ENCODE measurements at regions of chr12 and their contacts with region 1.

Region 1: GRCh38 chr12:7460375-7461259 is 16.7 kb upstream of the CD163L1 start:
- DNase-seq: no peak
- H3K4me3 ChIP-seq: no peak overlapping the region
- H3K27ac ChIP-seq: no peak overlapping the region
- H3K27me3 ChIP-seq: no peaks in the 10 kb centered on the region
- CTCF ChIP-seq: peak; percentile 98

Region 2: GRCh38 chr12:7219599-7220243 is 240.9 kb before region 1 on chr12:
- CTCF ChIA-PET with region 1: interaction called, 96 read pairs
- POLR2A ChIA-PET with region 1: no interaction called
- DNase-seq: peak; percentile 33
- H3K4me3 ChIP-seq: no peak overlapping the region
- H3K27ac ChIP-seq: no peak overlapping the region
- H3K27me3 ChIP-seq: peaks cover 4% of the 10 kb centered on the region
- CTCF ChIP-seq: peak; percentile 94

Region 3: DNA sequence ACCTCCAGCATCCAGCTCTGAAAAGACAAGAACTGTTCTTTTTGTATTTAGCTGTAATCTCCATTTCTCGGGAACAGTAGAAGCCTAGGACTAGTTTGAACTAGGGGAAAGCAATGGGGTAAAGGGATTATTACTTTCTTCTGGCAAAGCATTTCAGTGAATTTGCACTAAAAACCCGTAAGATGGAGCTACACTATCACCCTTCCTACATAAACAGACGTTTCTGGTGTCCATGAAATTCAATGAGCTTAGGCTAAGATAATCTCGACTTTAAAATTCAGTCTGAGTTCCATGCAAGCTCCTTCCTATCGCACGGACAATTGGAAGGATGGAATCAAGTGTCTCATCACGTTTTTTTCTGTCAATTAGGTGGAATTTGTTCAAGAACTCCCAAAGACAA is 132.7 kb before region 1 on chr12:
- CTCF ChIA-PET with region 1: interaction called, 13 read pairs
- POLR2A ChIA-PET with region 1: no interaction called
- DNase-seq: no peak
- H3K4me3 ChIP-seq: no peak overlapping the region
- H3K27ac ChIP-seq: no peak overlapping the region
- H3K27me3 ChIP-seq: no peaks in the 10 kb centered on the region
- CTCF ChIP-seq: no peak

Region 4: DNA sequence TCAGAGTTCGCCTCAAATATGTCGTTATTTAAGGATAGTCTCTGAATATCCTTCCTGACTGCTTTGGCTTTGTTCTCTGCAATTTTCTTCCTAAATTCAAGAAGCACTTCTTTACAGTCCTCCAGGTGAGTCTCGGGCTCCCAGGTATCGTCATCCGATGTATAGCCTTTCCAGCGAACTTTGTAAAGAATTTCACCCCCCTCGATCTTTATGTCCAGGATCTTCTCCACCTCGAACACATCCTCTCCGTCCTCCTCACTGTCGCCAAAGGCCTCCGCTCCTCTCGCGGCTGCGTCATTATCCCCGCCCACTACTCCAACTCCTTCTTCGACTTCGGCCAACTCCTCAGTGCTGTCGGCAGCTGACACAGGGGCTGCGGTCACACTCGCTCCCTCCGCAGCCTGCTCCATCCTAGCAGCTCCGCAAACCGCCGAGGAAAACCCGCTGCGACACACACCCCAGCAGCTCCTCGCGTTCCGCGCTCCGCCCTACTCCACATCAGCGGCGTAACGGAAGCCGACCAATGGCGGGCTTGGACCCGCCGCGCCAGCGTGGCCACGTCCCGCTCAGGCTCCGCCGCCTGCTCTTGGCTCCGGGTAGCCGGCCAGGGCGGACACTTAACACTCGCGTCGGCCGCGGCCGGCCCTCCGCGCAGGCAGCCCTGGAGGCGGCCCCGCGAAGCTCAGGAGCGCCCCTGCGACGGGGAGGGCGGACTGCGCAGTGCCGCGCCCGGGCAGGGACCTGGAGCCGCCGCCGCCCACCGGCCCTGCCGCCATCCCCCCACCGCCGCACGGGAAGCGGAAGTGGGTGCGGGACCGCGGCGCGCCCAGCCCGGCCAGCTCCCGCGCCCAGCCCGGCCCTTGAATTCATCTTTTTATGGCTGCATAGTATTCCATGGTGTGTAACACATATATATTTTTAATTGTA is 20.8 kb before region 1 on chr12:
- CTCF ChIA-PET with region 1: interaction called, 10 read pairs
- POLR2A ChIA-PET with region 1: no interaction called
- DNase-seq: peak; percentile 11
- H3K4me3 ChIP-seq: peak overlapping the region; percentile 57
- H3K27ac ChIP-seq: peak overlapping the region; percentile 34
- H3K27me3 ChIP-seq: no peaks in the 10 kb centered on the region
- CTCF ChIP-seq: no peak

Region 5: GRCh38 chr12:7479771-7480170 is 19.2 kb after region 1 on chr12:
- CTCF ChIA-PET with region 1: interaction called, 12 read pairs
- POLR2A ChIA-PET with region 1: no interaction called
- DNase-seq: no peak
- H3K4me3 ChIP-seq: no peak overlapping the region
- H3K27ac ChIP-seq: no peak overlapping the region
- H3K27me3 ChIP-seq: no peaks in the 10 kb centered on the region
- CTCF ChIP-seq: no peak

Region 6: DNA sequence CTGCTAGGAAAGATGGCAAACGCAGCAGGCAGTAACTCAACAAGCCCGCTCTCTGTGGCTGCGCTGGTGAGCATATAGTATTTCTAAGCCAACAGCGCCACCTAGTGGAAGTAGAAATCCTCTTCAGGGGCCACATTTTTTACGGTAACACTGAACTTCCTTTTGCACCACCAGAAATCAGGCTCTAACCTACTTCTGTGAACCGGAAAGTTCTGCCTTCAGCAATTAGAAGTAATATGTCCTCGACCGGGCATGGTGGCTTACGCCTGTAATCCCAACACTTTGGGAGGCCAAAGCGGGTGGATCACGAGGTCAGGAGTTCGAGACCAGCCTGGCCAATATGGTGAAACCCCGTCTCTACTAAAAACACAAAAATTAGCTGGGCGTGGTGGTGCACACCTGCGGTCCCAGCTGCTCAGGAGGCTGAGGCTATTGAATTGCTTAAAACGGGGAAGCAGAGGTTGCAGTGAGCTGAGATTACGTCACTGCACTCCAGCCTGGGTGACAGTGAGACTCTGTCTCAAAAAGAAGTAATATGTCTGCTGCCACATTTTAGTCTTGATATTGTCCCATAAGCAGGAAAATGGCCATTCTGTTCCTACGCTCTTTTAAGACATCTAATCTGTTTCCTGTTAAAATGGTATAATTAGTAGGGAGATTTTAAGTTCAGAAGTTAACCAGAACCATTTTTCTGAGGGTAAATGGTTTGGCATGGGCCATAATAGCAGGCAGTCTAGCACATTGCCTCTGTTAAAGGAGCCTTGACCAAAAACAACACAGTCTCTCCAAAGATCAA is 178.3 kb after region 1 on chr12:
- CTCF ChIA-PET with region 1: interaction called, 10 read pairs
- POLR2A ChIA-PET with region 1: no interaction called
- DNase-seq: peak; percentile 37
- H3K4me3 ChIP-seq: no peak overlapping the region
- H3K27ac ChIP-seq: no peak overlapping the region
- H3K27me3 ChIP-seq: peaks cover 4% of the 10 kb centered on the region
- CTCF ChIP-seq: peak; percentile 80

Region 7: DNA sequence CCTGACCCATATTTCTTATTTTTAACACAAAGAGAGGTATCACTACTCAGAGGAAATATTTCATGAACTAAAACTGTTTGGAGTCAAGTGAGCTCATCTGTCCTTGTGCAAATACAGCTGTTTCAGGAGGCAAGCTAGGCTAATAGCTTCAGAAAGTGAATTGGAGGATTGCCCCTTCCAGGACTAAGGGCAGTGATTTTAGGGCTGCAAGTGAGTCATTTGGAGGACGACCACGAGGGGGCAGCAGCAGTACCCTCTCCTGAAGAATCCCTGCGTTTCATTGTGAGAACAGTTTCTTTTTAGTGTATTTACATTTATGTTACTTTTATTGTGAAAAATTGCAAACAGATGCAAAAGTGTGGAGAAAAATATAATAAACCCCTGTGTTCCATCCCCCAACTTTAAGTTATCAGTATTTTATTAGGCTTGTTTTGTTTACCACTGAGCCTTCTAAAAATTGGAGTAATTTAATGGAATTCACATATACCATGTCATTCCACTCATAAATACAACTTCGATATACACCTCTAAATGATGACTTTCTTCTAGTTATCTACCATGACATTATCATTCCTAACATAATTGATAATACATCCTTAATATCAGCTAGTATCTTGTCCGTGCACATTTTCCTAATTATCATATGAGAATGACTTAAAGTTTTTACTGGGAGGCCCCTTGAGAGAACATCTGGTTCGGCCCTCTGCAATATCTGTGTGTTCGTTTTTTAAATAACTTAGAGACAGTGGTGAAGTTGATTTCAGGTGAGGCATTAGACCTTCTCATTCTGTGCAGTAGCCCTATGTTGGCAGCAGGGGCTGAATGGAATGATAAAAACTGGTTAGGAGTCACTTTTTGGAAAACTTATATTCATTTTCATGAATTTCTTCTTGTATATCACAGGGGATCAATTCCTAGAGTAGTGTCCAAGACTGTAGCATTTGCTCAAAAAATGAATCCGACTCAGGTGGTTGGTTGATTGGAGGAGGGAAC is 585.6 kb after region 1 on chr12:
- CTCF ChIA-PET with region 1: no interaction called
- POLR2A ChIA-PET with region 1: no interaction called
- DNase-seq: peak; percentile 82
- H3K4me3 ChIP-seq: no peak overlapping the region
- H3K27ac ChIP-seq: no peak overlapping the region
- H3K27me3 ChIP-seq: no peaks in the 10 kb centered on the region
- CTCF ChIP-seq: peak; percentile 94

Measured in AG04450 (cell line).